CD8-positive, alpha-beta memory T cell (primary cell): ENCODE measurements at regions of chr2 and their contacts with region 1.

Region 1: GRCh38 chr2:143162123-143162837 is 33.1 kb downstream of the ARHGAP15 start:
- DNase-seq: peak; percentile 31 to 75 (median 55)
- H3K4me3 ChIP-seq: no peak overlapping the region
- H3K4me3 Mint-ChIP-seq: no peak overlapping the region
- H3K27ac ChIP-seq: no peak overlapping the region
- H3K27ac Mint-ChIP-seq: peak overlapping the region in 7 of 8 donors; percentile 13 to 89 (median 66)
- H3K4me1 ChIP-seq: peaks cover 65% of the 10 kb centered on the region
- H3K4me1 Mint-ChIP-seq: peaks cover 82 to 93% (median 91%) of the 10 kb centered on the region in 3 donors
- H3K27me3 ChIP-seq: no peaks in the 10 kb centered on the region
- H3K27me3 Mint-ChIP-seq: no peaks in the 10 kb centered on the region

Region 2: DNA sequence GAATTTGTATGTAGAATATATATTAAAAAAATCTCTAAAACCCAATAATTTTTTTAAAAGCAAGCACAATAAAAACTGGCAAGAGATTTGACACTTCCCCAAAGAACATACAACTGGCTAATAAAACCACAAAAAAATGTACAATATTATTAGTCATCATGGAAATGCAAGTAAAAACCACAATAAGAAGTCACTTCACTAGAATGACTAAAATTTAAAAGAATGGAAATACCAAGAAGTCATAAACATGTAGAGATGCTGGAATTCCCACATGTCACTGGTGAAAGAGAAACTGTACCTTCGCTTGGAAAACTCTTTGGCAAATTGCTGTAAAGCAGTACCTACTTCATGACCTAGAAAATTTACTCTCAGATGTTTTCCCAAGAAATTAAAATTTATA is 328.3 kb before region 1 on chr2:
- CTCF ChIA-PET with region 1: no interaction called
- POLR2A ChIA-PET with region 1: no interaction called
- DNase-seq: no peak
- H3K4me3 ChIP-seq: no peak overlapping the region
- H3K4me3 Mint-ChIP-seq: no peak overlapping the region
- H3K27ac ChIP-seq: no peak overlapping the region
- H3K27ac Mint-ChIP-seq: no peak overlapping the region
- H3K4me1 ChIP-seq: no peaks in the 10 kb centered on the region
- H3K4me1 Mint-ChIP-seq: no peaks in the 10 kb centered on the region
- H3K27me3 ChIP-seq: no peaks in the 10 kb centered on the region
- H3K27me3 Mint-ChIP-seq: no peaks in the 10 kb centered on the region

Region 3: DNA sequence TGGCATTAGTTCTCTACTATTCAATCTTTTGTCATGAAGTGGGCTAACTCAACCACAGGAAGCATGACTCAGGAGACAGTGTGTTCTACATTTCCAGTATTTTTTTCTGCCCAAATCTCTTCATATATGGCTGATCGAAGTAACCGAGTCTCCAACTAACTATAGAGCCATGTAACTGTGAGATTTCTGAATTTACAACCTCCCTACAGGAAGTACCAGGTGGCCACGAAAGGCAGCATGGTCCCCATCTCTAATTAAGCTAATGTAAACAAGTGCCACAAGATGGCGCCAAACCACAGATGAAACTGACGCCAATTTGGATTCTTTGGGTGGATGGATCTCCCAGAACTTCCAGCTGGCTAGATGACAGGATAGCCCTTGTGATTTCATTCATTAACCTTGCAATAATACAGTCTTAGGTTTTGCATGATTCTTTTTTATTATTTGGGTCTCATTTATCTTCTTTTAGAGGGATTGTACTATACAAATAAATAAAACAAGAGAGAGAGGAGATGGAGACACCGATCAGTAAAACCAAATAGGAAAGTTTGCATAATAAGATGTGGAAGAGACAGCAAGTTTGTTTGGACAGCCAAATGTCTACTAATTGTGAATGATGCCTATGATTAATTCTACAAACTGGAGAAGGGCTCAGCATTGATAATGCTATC is 51.4 kb before region 1 on chr2:
- CTCF ChIA-PET with region 1: interaction called, 22 read pairs
- POLR2A ChIA-PET with region 1: no interaction called
- DNase-seq: peak; percentile 41 to 75 (median 58)
- H3K4me3 ChIP-seq: no peak overlapping the region
- H3K4me3 Mint-ChIP-seq: peak overlapping the region in 5 of 7 donors; percentile 4 to 51 (median 36)
- H3K27ac ChIP-seq: no peak overlapping the region
- H3K27ac Mint-ChIP-seq: peak overlapping the region in 7 of 8 donors; percentile 48 to 84 (median 74)
- H3K4me1 ChIP-seq: peaks cover 15% of the 10 kb centered on the region
- H3K4me1 Mint-ChIP-seq: peaks cover 10 to 28% (median 16%) of the 10 kb centered on the region in 3 donors
- H3K27me3 ChIP-seq: no peaks in the 10 kb centered on the region
- H3K27me3 Mint-ChIP-seq: no peaks in the 10 kb centered on the region

Region 4: GRCh38 chr2:143128681-143129580 is 33.3 kb before region 1 on chr2 and contains the start of gene ARHGAP15:
- CTCF ChIA-PET with region 1: interaction called, 35 read pairs
- POLR2A ChIA-PET with region 1: interaction called, 3 read pairs
- DNase-seq: peak; percentile 48 to 81 (median 78)
- H3K4me3 ChIP-seq: peak within 1 kb of the TSS; percentile 86
- H3K4me3 Mint-ChIP-seq: peak within 1 kb of the TSS; percentile 73 to 91 (median 83)
- H3K27ac ChIP-seq: peak within 1 kb of the TSS; percentile 81
- H3K27ac Mint-ChIP-seq: peak within 1 kb of the TSS; percentile 77 to 98 (median 94)
- H3K4me1 ChIP-seq: peaks cover 67% of the 10 kb centered on the region
- H3K4me1 Mint-ChIP-seq: peaks cover 35 to 56% (median 52%) of the 10 kb centered on the region in 3 donors
- H3K27me3 ChIP-seq: no peaks in the 10 kb centered on the region
- H3K27me3 Mint-ChIP-seq: no peaks in the 10 kb centered on the region
- total RNA-seq, gene ARHGAP15: 41.3 to 41.4 TPM

Region 5: DNA sequence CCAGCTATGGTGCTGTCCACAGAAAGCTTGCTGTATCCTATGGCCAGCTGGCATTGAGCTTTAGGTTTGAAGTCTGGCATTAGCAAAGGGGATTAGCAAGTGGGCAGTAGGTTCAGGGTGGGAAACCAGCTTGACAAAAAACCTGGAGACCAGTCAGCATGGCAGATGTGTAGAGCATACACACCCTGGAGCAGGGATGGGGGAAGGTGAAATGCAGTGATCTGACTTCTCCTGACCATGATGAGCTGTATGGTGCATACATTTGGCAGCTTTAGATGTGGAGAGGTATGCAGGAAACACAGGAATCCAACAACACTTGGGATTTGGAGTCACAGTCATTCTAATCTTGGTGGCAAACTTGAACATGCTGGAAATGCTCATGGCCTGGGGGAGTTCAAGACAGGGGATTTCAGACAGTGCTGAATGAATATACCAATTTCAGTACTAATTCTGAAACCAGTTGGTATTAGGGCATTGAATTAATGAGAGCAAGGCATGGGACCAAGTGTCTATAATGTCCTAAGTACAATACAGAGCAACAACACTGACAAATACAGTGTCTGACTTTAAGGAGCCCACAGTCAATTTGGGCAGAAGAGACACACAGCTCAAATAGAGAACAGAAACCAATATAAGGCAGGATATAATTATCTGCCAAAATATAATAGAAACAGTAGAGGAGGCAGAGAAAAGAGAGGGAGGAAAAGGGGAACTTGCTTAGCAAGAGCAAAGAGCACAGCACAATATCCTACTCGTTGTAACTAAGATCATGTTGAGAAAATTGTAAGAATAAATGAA is 21.2 kb before region 1 on chr2:
- CTCF ChIA-PET with region 1: interaction called, 10 read pairs
- POLR2A ChIA-PET with region 1: no interaction called
- DNase-seq: no peak
- H3K4me3 ChIP-seq: peak overlapping the region; percentile 39
- H3K4me3 Mint-ChIP-seq: peak overlapping the region; percentile 46 to 81 (median 73)
- H3K27ac ChIP-seq: no peak overlapping the region
- H3K27ac Mint-ChIP-seq: peak overlapping the region in 6 of 8 donors; percentile 10 to 91 (median 40)
- H3K4me1 ChIP-seq: peaks cover 76% of the 10 kb centered on the region
- H3K4me1 Mint-ChIP-seq: peaks cover 85 to 98% (median 96%) of the 10 kb centered on the region in 3 donors
- H3K27me3 ChIP-seq: no peaks in the 10 kb centered on the region
- H3K27me3 Mint-ChIP-seq: no peaks in the 10 kb centered on the region

Region 6: GRCh38 chr2:143205106-143205764 is 43.0 kb after region 1 on chr2:
- CTCF ChIA-PET with region 1: interaction called, 10 read pairs
- POLR2A ChIA-PET with region 1: no interaction called
- DNase-seq: peak in 2 of 5 donors; percentile 34 to 36
- H3K4me3 ChIP-seq: no peak overlapping the region
- H3K4me3 Mint-ChIP-seq: peak overlapping the region in 2 of 7 donors; percentile 39 to 54
- H3K27ac ChIP-seq: no peak overlapping the region
- H3K27ac Mint-ChIP-seq: peak overlapping the region in 7 of 8 donors; percentile 28 to 90 (median 69)
- H3K4me1 ChIP-seq: peaks cover 36% of the 10 kb centered on the region
- H3K4me1 Mint-ChIP-seq: peaks cover 61 to 76% (median 65%) of the 10 kb centered on the region in 3 donors
- H3K27me3 ChIP-seq: no peaks in the 10 kb centered on the region
- H3K27me3 Mint-ChIP-seq: no peaks in the 10 kb centered on the region

Region 7: GRCh38 chr2:143225931-143226330 is 63.7 kb after region 1 on chr2:
- CTCF ChIA-PET with region 1: interaction called, 22 read pairs
- POLR2A ChIA-PET with region 1: interaction called, 3 read pairs
- DNase-seq: no peak
- H3K4me3 ChIP-seq: no peak overlapping the region
- H3K4me3 Mint-ChIP-seq: peak overlapping the region in 3 of 7 donors; percentile 8 to 21 (median 9)
- H3K27ac ChIP-seq: no peak overlapping the region
- H3K27ac Mint-ChIP-seq: peak overlapping the region; percentile 14 to 69 (median 46)
- H3K4me1 ChIP-seq: peaks cover 32% of the 10 kb centered on the region
- H3K4me1 Mint-ChIP-seq: peaks cover 40 to 75% (median 71%) of the 10 kb centered on the region in 3 donors
- H3K27me3 ChIP-seq: no peaks in the 10 kb centered on the region
- H3K27me3 Mint-ChIP-seq: no peaks in the 10 kb centered on the region

Region 8: GRCh38 chr2:143294068-143294467 is 131.8 kb after region 1 on chr2:
- CTCF ChIA-PET with region 1: no interaction called
- POLR2A ChIA-PET with region 1: no interaction called
- DNase-seq: no peak
- H3K4me3 ChIP-seq: no peak overlapping the region
- H3K4me3 Mint-ChIP-seq: no peak overlapping the region
- H3K27ac ChIP-seq: no peak overlapping the region
- H3K27ac Mint-ChIP-seq: peak overlapping the region in 5 of 8 donors; percentile 11 to 72 (median 17)
- H3K4me1 ChIP-seq: peaks cover 3% of the 10 kb centered on the region
- H3K4me1 Mint-ChIP-seq: peaks cover 58 to 77% (median 71%) of the 10 kb centered on the region in 3 donors
- H3K27me3 ChIP-seq: no peaks in the 10 kb centered on the region
- H3K27me3 Mint-ChIP-seq: no peaks in the 10 kb centered on the region